MCF 10A (cell line): ENCODE measurements at regions of chr13 and their contacts with region 1.

Region 1: DNA sequence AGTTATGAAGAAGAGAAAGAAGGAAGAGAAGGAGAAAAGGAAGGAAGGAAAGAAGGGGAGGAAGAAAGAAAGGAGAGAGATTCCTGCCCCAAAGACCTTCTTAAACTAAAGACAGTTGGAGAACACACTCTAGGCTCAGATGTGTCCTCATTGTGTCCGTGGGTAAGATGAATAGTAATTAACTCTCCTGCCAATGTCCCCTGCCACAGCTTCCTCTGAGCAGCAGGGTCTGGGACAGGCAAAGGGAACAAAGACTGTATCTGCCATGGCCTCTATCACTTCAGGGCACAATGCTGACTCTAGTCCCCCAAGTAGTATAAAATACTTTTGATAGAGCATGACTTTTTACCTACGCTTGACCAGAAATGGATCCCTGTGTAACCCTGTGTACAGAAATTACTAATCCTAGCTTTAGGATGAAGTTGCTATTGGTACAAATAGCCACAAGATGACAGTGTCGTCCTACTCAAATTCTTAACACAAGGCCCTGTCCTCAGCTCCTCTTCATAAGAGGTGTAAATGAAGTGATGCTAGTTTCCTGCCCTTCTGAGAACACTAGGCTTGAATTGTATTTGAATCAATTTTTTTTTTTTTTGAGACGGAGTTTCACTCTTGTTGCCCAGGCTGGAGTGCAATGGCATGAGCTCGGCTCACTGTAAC is 186.2 kb upstream of the GPR12 start:
- DNase-seq: peak; percentile 59
- H3K4me3 Mint-ChIP-seq: no peak overlapping the region
- H3K27ac Mint-ChIP-seq: no peak overlapping the region
- H3K4me1 Mint-ChIP-seq: no peaks in the 10 kb centered on the region
- H3K27me3 Mint-ChIP-seq: no peaks in the 10 kb centered on the region
- CTCF ChIP-seq: peak; percentile 74

Region 2: GRCh38 chr13:26967119-26968038 is 20.6 kb after region 1 on chr13:
- CTCF ChIA-PET with region 1: interaction called, 10 read pairs
- POLR2A ChIA-PET with region 1: no interaction called
- intact Hi-C with region 1: no loop called
- DNase-seq: no peak
- H3K4me3 Mint-ChIP-seq: no peak overlapping the region
- H3K27ac Mint-ChIP-seq: no peak overlapping the region
- H3K4me1 Mint-ChIP-seq: no peaks in the 10 kb centered on the region
- H3K27me3 Mint-ChIP-seq: peaks cover 33% of the 10 kb centered on the region
- CTCF ChIP-seq: no peak

Region 3: DNA sequence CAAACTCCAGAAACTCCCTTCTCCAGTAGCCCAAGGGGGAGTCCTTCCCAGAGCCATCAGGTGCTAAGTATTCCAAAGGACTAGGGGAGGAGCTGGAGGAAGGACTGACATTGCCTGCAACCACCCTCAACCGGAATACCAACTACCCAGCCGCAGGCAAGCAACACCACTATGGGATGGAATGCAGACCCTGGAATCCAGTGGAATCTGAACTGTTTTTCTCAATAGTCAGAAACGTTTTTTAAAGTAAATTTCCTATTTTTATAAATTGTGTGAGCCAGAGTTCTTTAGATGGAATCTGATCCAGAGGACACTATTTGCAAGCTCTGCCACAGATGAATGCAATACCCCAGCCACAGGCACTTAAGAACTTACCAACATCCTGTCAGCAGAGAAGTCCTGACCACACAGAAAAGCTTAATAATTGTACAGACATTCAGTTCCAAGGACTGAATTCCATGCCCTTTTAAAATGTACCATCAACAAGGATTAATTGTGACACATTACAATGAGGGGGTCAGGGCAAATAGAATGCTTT is 132.7 kb after region 1 on chr13:
- CTCF ChIA-PET with region 1: no interaction called
- POLR2A ChIA-PET with region 1: no interaction called
- intact Hi-C with region 1: no loop called
- DNase-seq: no peak
- H3K4me3 Mint-ChIP-seq: no peak overlapping the region
- H3K27ac Mint-ChIP-seq: no peak overlapping the region
- H3K4me1 Mint-ChIP-seq: no peaks in the 10 kb centered on the region
- H3K27me3 Mint-ChIP-seq: no peaks in the 10 kb centered on the region
- CTCF ChIP-seq: no peak

Region 4: DNA sequence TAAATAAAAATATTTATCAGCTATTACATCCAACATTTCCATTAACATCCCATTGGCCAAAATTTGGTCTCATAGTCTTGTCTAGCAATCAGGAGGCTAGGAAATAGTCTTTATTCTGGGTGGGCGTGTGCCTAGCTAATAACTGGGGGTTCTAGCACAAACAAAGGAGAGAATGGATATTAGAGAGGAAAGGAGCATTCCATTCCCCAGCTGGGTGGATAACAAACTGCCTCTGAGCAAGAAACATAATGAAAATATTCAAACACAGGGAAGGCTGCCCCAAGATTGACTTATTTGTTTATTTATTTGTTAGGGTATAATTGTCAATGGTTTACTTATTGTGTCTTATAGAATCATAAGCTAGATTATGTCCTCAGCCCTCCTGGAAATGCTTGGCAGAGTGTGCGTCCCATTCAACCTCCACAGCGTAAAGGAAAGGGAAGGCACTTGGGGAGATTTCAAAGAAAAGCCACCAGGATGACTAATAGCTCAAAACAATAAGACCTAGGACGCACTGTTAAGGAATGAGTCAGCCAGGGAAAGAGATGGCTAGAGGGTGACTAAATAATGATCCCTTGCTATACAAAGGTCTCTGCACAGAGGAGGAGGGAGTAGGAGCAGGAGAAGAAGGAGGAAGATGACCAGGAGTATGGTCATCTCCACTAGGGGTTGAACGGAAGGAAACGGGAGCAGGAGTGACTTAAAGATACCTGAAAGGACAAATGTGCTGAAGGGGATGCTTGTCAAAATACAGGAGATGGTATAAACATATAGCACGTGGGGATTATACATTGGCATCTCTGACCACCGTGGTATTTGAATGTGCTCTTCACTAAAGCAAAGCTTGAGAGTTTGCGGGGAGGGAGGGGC is 248.3 kb after region 1 on chr13:
- CTCF ChIA-PET with region 1: no interaction called
- POLR2A ChIA-PET with region 1: no interaction called
- intact Hi-C with region 1: no loop called
- DNase-seq: peak; percentile 93
- H3K4me3 Mint-ChIP-seq: no peak overlapping the region
- H3K27ac Mint-ChIP-seq: no peak overlapping the region
- H3K4me1 Mint-ChIP-seq: peaks cover 17% of the 10 kb centered on the region
- H3K27me3 Mint-ChIP-seq: no peaks in the 10 kb centered on the region
- CTCF ChIP-seq: no peak

Region 5: GRCh38 chr13:27258637-27259386 is 312.0 kb after region 1 on chr13:
- CTCF ChIA-PET with region 1: no interaction called
- POLR2A ChIA-PET with region 1: no interaction called
- intact Hi-C with region 1: no loop called
- DNase-seq: no peak
- H3K4me3 Mint-ChIP-seq: no peak overlapping the region
- H3K27ac Mint-ChIP-seq: no peak overlapping the region
- H3K4me1 Mint-ChIP-seq: peaks cover 12% of the 10 kb centered on the region
- H3K27me3 Mint-ChIP-seq: no peaks in the 10 kb centered on the region
- CTCF ChIP-seq: no peak

Region 6: GRCh38 chr13:27283906-27284493 is 337.2 kb after region 1 on chr13:
- CTCF ChIA-PET with region 1: interaction called, 4 read pairs
- POLR2A ChIA-PET with region 1: no interaction called
- intact Hi-C with region 1: loop called (anchors 1 kb)
- DNase-seq: peak; percentile 56
- H3K4me3 Mint-ChIP-seq: no peak overlapping the region
- H3K27ac Mint-ChIP-seq: no peak overlapping the region
- H3K4me1 Mint-ChIP-seq: no peaks in the 10 kb centered on the region
- H3K27me3 Mint-ChIP-seq: no peaks in the 10 kb centered on the region
- CTCF ChIP-seq: no peak

Region 7: GRCh38 chr13:27353166-27353583 is 406.4 kb after region 1 on chr13:
- CTCF ChIA-PET with region 1: interaction called, 70 read pairs
- POLR2A ChIA-PET with region 1: no interaction called
- intact Hi-C with region 1: no loop called
- DNase-seq: no peak
- H3K4me3 Mint-ChIP-seq: no peak overlapping the region
- H3K27ac Mint-ChIP-seq: no peak overlapping the region
- H3K4me1 Mint-ChIP-seq: no peaks in the 10 kb centered on the region
- H3K27me3 Mint-ChIP-seq: peaks cover 6% of the 10 kb centered on the region
- CTCF ChIP-seq: no peak